MCF 10A (cell line): ENCODE measurements at regions of chr11 and their contacts with region 1.

Region 1: DNA sequence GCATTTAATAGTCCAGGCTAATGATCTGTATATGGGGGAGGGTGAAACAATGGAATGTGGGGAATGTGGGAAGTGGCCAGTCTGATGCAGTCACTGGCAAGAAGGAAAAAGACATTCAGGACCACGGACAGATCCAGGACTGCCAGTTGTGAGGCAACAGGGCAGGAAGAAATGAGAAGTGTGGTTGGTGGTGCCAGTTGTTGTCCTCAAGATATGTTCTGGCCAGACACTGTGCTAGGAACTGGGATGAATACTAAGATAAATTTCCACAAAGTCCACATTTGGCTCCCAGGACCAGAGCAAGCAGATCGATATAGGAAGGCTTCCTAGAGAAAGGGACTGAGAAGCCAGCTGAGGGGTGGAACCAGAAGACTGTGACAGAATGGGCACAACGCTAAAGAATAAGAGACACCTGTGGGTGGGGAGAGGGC is 6.8 kb upstream of the TPBGL start:
- DNase-seq: peak; percentile 72
- H3K4me3 Mint-ChIP-seq: no peak overlapping the region
- H3K27ac Mint-ChIP-seq: no peak overlapping the region
- H3K4me1 Mint-ChIP-seq: no peaks in the 10 kb centered on the region
- H3K27me3 Mint-ChIP-seq: peaks cover 26% of the 10 kb centered on the region
- CTCF ChIP-seq: no peak

Region 2: GRCh38 chr11:75204685-75205563 is 28.8 kb before region 1 on chr11:
- CTCF ChIA-PET with region 1: interaction called, 10 read pairs
- POLR2A ChIA-PET with region 1: no interaction called
- intact Hi-C with region 1: no loop called
- DNase-seq: peak; percentile 83
- H3K4me3 Mint-ChIP-seq: no peak overlapping the region
- H3K27ac Mint-ChIP-seq: no peak overlapping the region
- H3K4me1 Mint-ChIP-seq: no peaks in the 10 kb centered on the region
- H3K27me3 Mint-ChIP-seq: peaks cover 32% of the 10 kb centered on the region
- CTCF ChIP-seq: peak; percentile 83

Region 3: DNA sequence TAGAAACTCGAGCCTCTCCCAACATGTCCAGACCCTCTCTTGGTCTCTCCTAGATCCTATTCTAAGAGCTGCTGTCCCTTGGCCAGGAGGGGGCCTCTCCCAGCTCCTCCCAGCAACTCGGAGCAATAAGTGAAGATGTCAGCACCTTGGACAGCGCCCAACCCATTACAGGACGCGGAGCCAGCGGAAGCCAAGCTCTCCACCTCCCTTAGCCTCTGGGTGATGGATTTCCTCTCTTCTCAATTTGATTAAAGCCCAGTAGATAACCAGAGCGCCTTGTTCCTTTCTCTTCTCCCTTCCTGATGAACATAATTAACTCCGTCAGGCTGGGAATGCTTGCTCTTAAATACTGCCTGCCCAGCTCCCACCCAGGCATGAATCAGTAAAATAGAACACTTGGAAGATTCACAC is 19.3 kb before region 1 on chr11:
- CTCF ChIA-PET with region 1: interaction called, 3 read pairs
- POLR2A ChIA-PET with region 1: no interaction called
- intact Hi-C with region 1: loop called (anchors 1 kb)
- DNase-seq: peak; percentile 84
- H3K4me3 Mint-ChIP-seq: no peak overlapping the region
- H3K27ac Mint-ChIP-seq: no peak overlapping the region
- H3K4me1 Mint-ChIP-seq: no peaks in the 10 kb centered on the region
- H3K27me3 Mint-ChIP-seq: peaks cover 60% of the 10 kb centered on the region
- CTCF ChIP-seq: no peak

Region 4: GRCh38 chr11:75263944-75264349 is 30.2 kb after region 1 on chr11:
- CTCF ChIA-PET with region 1: no interaction called
- POLR2A ChIA-PET with region 1: no interaction called
- intact Hi-C with region 1: no loop called
- DNase-seq: peak; percentile 47
- H3K4me3 Mint-ChIP-seq: no peak overlapping the region
- H3K27ac Mint-ChIP-seq: no peak overlapping the region
- H3K4me1 Mint-ChIP-seq: no peaks in the 10 kb centered on the region
- H3K27me3 Mint-ChIP-seq: peaks cover 11% of the 10 kb centered on the region
- CTCF ChIP-seq: no peak